Right ventricle myocardium inferior (tissue), 1 donor: ENCODE measurements at regions of chr6 and their contacts with region 1.

Region 1: GRCh38 chr6:3456755-3457466 is at the start of gene SLC22A23:
- DNase-seq: peak; percentile 74
- ATAC-seq: peak; percentile 86
- total RNA-seq, gene SLC22A23: 5.6 TPM

Region 2: DNA sequence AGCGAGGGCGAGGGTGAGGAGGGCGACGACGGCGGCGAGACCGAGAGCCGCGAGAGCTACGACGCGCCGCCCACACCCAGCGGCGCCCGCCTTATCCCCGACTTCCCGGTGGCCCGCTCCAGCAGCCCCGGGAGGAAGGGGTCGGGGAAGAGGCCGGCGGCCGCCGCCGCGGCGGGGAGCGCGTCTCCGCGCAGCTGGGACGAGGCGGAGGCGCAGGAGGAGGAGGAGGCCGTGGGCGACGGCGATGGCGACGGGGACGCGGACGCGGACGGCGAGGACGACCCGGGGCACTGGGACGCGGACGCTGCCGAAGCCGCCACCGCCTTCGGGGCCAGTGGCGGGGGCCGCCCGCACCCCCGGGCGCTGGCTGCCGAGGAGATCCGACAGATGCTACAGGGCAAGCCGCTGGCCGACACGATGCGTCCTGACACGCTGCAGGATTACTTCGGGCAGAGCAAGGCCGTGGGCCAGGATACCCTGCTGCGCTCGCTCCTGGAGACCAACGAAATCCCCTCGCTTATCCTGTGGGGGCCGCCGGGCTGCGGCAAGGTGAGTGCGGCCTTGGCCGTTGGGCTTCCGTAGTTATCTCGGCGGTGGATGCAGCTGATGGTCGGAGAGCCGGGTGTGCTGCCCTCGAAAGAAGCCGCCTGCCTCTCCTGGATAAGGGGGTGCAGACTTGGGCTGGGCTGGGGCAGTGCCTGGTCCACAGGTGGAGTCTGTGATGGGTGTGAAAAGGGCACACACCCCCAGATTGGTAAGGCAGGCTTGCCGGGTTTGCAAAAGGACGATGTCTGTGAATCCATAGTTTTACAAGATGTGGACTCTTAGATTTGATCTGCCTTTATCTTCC is 690.8 kb before region 1 on chr6:
- intact Hi-C with region 1: no loop called
- DNase-seq: peak; percentile 82
- ATAC-seq: peak; percentile 12

Region 3: GRCh38 chr6:3277851-3278416 is 179.0 kb before region 1 on chr6:
- intact Hi-C with region 1: loop called (anchors 2 kb)
- DNase-seq: no peak
- ATAC-seq: no peak

Region 4: DNA sequence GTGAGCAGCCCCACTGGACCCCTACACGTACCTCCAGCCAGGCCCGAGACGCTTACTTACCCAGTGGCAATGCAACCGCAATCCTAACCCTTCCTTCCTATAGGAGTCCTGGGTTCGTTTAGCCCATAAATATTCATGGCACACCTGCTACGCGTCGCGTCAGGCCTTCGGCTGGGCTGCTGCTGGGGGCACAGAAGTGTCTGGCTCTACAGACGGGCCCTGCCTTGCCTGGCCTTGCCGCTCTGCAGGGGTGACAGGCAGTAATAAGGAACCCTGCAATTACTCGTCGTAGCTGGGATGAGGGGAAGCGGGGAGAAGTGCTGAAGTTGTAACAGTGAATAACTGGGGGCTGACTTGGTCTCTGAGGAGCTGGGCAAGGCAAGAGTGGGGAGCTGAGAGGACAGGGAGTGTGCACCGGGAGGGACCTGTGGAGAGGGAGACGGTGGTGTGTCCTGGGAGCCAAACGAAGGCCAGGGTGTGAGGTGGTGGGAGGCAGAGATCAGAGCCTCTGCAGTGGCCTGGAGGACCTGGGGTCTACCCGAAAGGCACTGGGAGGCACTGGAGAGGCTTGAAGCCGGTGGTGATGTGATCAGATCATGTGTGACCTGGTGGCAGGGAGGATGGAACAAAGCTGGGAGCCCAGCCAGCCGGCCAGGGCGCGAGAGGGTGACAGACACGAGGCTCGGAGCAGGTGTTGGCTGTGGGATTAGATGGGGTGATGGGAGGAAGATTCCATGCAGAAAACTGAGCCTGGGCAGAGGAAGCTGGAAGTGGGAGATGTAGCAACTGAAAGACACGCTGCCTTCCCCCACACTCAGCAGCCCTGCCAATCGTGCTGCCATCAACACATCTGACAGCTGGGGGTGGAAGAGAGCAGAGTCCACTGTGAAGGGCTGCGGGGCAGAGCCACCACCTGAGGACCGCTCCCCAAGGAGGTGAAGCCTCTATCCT is 161.7 kb before region 1 on chr6:
- intact Hi-C with region 1: loop called (anchors 5 kb)
- DNase-seq: no peak
- ATAC-seq: no peak

Region 5: DNA sequence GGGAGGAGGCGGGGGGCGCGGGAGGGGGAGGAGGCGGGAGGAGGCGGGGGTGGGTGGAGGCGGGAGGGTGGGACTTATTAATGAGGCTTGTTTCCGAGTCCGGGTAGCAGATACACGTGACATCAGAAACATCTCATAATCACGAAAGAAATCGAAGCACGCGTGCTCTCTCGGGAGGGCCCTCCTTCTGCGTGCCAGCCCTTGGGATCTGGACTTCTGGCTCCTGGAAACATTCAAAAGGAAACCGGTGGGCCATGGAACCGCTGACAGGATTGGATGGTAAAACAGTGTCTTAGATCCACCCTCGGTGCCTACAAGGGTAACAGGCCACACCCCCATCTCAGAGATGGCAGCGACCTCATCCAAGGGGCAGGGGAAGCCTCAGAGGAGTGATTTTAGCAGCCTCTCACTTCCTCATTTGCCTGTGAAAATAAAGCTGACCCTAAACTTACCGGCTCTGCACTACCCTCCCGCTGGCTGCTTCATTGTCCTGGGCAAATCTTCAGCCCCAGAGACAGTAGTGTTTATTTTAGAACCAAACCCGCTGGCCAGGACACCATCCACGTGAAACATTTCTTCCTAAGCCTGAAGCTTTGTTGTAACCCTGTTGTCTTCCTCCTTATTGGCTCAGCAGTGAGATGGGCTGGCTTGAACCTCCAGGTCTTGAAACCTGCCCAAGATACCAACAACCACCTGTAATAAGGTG is 100.7 kb before region 1 on chr6:
- intact Hi-C with region 1: loop called (anchors 10 kb)
- DNase-seq: no peak
- ATAC-seq: peak; percentile 73

Region 6: DNA sequence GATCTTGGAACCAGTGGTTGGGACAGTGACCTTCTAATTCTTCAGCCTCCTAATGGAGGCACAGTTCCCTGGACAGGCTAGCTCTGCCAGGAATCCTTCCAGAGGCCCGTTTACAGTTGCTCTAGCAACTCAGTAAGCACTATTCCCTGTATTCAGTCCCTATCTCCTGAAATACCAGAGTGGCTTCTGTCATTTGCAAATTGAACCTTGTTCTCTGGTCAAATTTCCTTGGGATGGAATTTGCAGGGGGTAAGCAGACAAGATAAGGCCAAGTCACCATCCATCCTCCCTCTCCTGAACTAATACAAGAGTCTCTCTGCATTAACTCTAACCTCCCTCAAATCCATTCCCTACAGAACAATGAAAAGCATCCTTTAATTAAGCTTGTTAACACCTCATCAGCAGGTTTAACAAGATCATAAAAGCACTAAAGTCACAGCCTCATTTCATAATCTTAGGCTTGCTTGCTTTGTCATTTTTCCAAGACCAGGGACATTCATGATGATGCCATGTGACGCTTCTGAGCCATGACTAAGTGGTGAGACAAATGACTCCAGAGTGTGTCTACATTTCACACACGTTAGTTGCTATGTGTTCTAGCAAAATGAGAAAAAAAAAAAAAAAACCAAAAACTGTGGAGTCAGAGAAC is 37.2 kb before region 1 on chr6:
- intact Hi-C with region 1: no loop called
- DNase-seq: no peak
- ATAC-seq: no peak

Region 7: DNA sequence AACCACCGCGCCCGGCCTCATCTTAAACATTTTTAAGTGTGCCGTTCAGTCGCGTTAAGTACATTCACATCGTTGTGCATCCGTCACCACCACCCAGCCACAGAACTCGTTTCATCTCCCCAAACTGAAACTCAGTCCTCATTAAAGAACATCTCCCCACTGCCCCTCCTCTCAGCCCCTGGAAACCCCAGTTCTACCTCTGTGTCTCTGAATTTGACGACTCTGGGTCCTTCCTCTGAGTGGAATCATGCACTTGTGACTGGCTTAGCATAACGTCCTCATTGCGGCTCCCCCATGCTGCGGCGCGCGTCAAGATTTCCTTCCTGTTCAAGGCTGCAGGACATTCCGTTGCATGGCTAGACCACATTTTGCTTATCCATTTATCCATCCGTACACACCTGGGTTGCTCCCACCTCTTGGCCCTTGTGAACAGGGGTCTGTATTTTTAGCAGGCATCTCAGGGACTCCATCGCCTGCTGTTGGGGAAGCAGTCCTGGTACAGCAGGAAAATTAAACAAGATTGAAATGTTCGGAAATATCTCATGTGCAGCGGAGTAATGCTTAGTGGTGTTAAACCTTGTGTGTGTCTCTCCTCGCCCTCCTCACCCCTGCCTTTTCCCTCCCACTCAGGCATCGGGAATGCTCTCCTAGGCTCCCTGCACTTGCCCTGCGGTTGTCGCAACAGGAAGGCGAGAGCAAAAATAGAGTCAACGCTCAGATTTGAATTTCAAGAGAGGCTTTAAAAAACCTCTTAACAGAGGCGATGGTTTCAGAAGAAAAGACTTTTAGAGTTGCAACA is 166.7 kb after region 1 on chr6:
- intact Hi-C with region 1: no loop called
- DNase-seq: no peak
- ATAC-seq: no peak